GM12878 (cell line): ENCODE measurements at regions of chr2 and their contacts with region 1.

Region 1: DNA sequence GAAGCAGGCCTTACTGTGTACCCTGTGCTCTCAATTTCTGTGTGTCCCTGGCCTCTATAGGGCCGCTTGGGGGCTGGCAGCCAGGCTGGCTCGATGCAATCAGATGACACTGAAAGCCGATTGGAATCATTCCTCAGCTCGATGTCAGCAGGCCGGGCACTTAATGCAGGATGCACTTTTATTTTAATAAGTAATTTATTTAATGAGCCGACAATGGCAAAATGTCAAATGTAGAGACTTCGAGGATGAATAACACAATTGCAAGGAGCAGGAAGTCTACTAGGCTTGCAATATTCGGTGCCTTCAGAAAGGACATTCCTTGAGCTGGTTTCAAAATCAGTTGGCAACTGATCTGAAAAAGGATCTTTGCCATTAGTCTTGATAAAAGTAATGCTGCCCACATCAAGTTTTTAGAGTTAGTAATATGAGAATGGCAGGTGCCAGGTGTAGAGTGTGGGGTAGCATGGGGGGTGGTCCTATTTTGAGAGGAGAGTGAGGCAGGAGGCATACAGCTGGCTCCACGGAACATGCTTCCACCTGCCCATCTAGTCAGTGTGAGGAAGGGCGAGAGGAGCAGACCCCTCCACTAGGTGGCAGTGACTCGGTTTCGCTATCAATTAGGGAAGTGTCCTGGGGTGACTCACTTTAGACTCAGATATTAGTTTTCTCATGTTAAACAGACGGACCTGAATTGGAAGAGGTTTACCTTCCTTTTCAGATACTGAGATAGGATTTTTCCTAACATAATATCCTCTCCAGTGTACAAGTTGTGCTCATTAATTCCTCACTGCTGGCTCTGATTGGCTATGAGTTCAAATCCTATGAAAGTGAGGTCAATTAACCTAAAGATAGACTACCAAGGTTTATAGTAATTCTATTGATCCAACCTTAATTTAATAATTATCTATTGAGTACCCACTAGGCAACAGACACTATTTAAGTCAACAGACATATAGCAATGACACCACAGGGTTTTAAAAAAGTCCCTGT is 80.9 kb downstream of the NABP1 start:
- DNase-seq: peak; percentile 55
- ATAC-seq: peak; percentile 100
- H3K4me3 ChIP-seq: no peak overlapping the region
- H3K27ac ChIP-seq: no peak overlapping the region
- H3K4me1 ChIP-seq: 0 out of 2 replicates have a peak, but pooled peaks cover 2% of the 10 kb centered on the region
- H3K27me3 ChIP-seq: no peaks in the 10 kb centered on the region
- CTCF ChIP-seq: peak; percentile 77 to 88 (median 83)
- EP300 ChIP-seq: no peak
- POLR2A ChIP-seq: no peak
- RAD21 ChIP-seq: peak; percentile 54; the same call in 1 of the 2 replicates

Region 2: GRCh38 chr2:191710411-191710900 is 48.4 kb before region 1 on chr2:
- CTCF ChIA-PET with region 1: interaction called, 10 read pairs
- POLR2A ChIA-PET with region 1: no interaction called
- RAD21 ChIA-PET with region 1: interaction called, 3 read pairs
- SMC1A ChIA-PET with region 1: interaction called, 6 read pairs
- in situ Hi-C with region 1: no loop called
- intact Hi-C with region 1: no loop called
- DNase-seq: no peak
- ATAC-seq: no peak
- H3K4me3 ChIP-seq: no peak overlapping the region
- H3K27ac ChIP-seq: no peak overlapping the region
- H3K4me1 ChIP-seq: no peaks in the 10 kb centered on the region
- H3K27me3 ChIP-seq: no peaks in the 10 kb centered on the region
- CTCF ChIP-seq: no peak
- EP300 ChIP-seq: no peak
- POLR2A ChIP-seq: no peak
- RAD21 ChIP-seq: no peak

Region 3: GRCh38 chr2:191748059-191748461 is 10.8 kb before region 1 on chr2:
- CTCF ChIA-PET with region 1: interaction called, 32 read pairs
- POLR2A ChIA-PET with region 1: interaction called, 9 read pairs
- RAD21 ChIA-PET with region 1: interaction called, 3 read pairs
- SMC1A ChIA-PET with region 1: interaction called, 10 read pairs
- in situ Hi-C with region 1: no loop called
- intact Hi-C with region 1: no loop called
- DNase-seq: no peak
- ATAC-seq: peak; percentile 64
- H3K4me3 ChIP-seq: no peak overlapping the region
- H3K27ac ChIP-seq: no peak overlapping the region
- H3K4me1 ChIP-seq: peaks cover 10% of the 10 kb centered on the region
- H3K27me3 ChIP-seq: no peaks in the 10 kb centered on the region
- CTCF ChIP-seq: no peak
- EP300 ChIP-seq: no peak
- POLR2A ChIP-seq: no peak
- RAD21 ChIP-seq: no peak

Region 4: DNA sequence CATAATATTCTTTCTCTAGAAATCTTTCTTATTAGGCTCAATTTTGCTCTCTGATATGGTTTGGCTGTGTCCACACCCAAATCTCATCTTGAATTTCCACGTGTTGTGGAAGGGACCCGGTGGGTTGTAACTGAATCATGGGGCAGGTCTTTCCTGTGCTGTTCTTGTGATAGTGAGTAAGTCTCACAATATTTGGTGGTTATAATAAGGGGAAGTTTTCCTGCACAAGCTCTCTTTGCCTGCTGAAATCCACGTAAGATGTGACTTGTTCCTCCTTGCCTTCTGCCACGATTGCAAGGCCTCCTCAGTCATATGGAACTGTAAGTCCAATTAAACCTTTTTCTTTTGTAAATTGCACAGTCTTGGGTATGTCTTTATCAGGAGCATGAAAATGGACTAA is 14.3 kb after region 1 on chr2:
- CTCF ChIA-PET with region 1: interaction called, 20 read pairs
- POLR2A ChIA-PET with region 1: no interaction called
- RAD21 ChIA-PET with region 1: no interaction called
- SMC1A ChIA-PET with region 1: interaction called, 6 read pairs
- in situ Hi-C with region 1: no loop called
- intact Hi-C with region 1: no loop called
- DNase-seq: no peak
- ATAC-seq: no peak
- H3K4me3 ChIP-seq: no peak overlapping the region
- H3K27ac ChIP-seq: no peak overlapping the region
- H3K4me1 ChIP-seq: no peaks in the 10 kb centered on the region
- H3K27me3 ChIP-seq: no peaks in the 10 kb centered on the region
- CTCF ChIP-seq: no peak
- EP300 ChIP-seq: no peak
- POLR2A ChIP-seq: no peak
- RAD21 ChIP-seq: no peak

Region 5: GRCh38 chr2:191789796-191790195 is 31.0 kb after region 1 on chr2:
- CTCF ChIA-PET with region 1: interaction called, 5 read pairs
- POLR2A ChIA-PET with region 1: interaction called, 7 read pairs
- RAD21 ChIA-PET with region 1: interaction called, 3 read pairs
- SMC1A ChIA-PET with region 1: interaction called, 7 read pairs
- in situ Hi-C with region 1: no loop called
- intact Hi-C with region 1: loop called (anchors 5 kb)
- DNase-seq: no peak
- ATAC-seq: peak; percentile 50
- H3K4me3 ChIP-seq: no peak overlapping the region
- H3K27ac ChIP-seq: no peak overlapping the region
- H3K4me1 ChIP-seq: no peaks in the 10 kb centered on the region
- H3K27me3 ChIP-seq: peaks cover 0 to 2% of the 10 kb centered on the region in 2 experiments; a peak in 1 of 4 replicates
- CTCF ChIP-seq: no peak
- EP300 ChIP-seq: no peak
- POLR2A ChIP-seq: no peak
- RAD21 ChIP-seq: no peak